CD4-positive, alpha-beta memory T cell (primary cell): ENCODE measurements at regions of chr3 and their contacts with region 1.

Region 1: GRCh38 chr3:121749276-121750086 is at the start of gene GOLGB1:
- DNase-seq: peak; percentile 93 to 98 (median 97)
- H3K4me3 ChIP-seq: peak within 1 kb of the TSS; percentile 75 to 86
- H3K4me3 Mint-ChIP-seq: peak within 1 kb of the TSS in 2 of 8 donors; percentile 17 to 44
- H3K27ac ChIP-seq: peak within 1 kb of the TSS; percentile 99
- H3K27ac Mint-ChIP-seq: no peak within 1 kb of the TSS
- H3K4me1 ChIP-seq: peaks cover 34% of the 10 kb centered on the region
- H3K4me1 Mint-ChIP-seq: peaks cover 8 to 10% (median 9%) of the 10 kb centered on the region in 4 donors
- H3K27me3 ChIP-seq: no peaks in the 10 kb centered on the region
- H3K27me3 Mint-ChIP-seq: peaks cover 6 to 7% of the 10 kb centered on the region in 2 donors
- total RNA-seq, gene GOLGB1: 45.7 to 49.3 TPM

Region 2: GRCh38 chr3:120596116-120596852 is 1153.2 kb before region 1 on chr3 and contains the start of gene NDUFB4:
- CTCF ChIA-PET with region 1: no interaction called
- POLR2A ChIA-PET with region 1: no interaction called
- intact Hi-C with region 1: loop called (anchors 10 kb)
- DNase-seq: peak; percentile 89 to 96 (median 96)
- H3K4me3 ChIP-seq: peak within 1 kb of the TSS; percentile 97 to 99
- H3K4me3 Mint-ChIP-seq: peak within 1 kb of the TSS; percentile 91 to 98 (median 95)
- H3K27ac ChIP-seq: peak within 1 kb of the TSS; percentile 98
- H3K27ac Mint-ChIP-seq: peak within 1 kb of the TSS in 6 of 7 donors; percentile 96 to 99 (median 98)
- H3K4me1 ChIP-seq: peaks cover 30% of the 10 kb centered on the region
- H3K4me1 Mint-ChIP-seq: peaks cover 6 to 8% (median 7%) of the 10 kb centered on the region in 4 donors
- H3K27me3 ChIP-seq: no peaks in the 10 kb centered on the region
- H3K27me3 Mint-ChIP-seq: no peaks in the 10 kb centered on the region
- total RNA-seq, gene NDUFB4: 82.1 to 82.8 TPM

Region 3: DNA sequence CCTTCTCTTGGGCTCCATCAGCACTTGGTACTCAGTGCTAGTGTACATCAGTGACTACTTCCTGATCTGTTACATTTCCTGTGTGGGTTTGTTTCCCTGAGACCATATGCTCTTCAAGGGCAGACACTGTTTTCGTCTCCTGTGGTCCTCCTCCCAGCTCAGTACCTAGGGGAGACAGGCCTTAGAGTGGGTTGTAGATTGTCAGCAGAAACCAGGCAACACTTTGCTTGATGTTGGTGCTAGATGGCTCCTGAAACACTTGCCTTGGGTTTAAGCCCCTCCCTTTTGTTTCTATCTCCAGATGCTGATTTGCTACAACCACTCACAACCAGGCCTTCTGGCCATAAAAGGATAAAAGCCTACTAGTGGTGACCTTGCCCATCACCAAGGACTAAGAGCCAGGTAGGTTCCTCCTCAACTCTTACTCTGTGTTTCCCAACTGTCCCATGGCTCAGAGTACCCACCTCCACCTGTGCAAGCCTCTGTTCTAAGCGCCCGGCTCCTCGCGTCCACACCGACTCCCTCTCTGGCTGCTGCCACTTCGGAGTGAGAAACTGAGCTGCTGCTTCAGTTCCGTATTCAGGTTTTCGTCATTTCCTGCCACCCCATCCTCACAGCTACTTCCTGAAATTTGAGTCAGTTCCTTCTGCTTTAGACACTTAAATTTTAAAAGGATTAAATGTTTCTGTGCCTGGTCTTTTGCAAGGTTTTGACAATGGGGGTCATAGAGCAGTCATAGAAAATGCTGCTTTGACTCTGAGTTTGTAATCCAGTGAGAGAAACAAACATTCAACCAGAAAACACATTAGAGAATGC is 88.9 kb before region 1 on chr3 and contains the start of gene HCLS1:
- CTCF ChIA-PET with region 1: interaction called, 7 read pairs
- POLR2A ChIA-PET with region 1: interaction called, 33 read pairs
- intact Hi-C with region 1: loop called (anchors 1 kb)
- DNase-seq: peak; percentile 80 to 86 (median 83)
- H3K4me3 ChIP-seq: peak within 1 kb of the TSS; percentile 58 to 76
- H3K4me3 Mint-ChIP-seq: peak within 1 kb of the TSS; percentile 91 to 99 (median 94)
- H3K27ac ChIP-seq: peak within 1 kb of the TSS; percentile 85
- H3K27ac Mint-ChIP-seq: peak within 1 kb of the TSS; percentile 95 to 100 (median 99)
- H3K4me1 ChIP-seq: peaks cover 42% of the 10 kb centered on the region
- H3K4me1 Mint-ChIP-seq: peaks cover 36 to 62% (median 50%) of the 10 kb centered on the region in 4 donors
- H3K27me3 ChIP-seq: no peaks in the 10 kb centered on the region
- H3K27me3 Mint-ChIP-seq: no peaks in the 10 kb centered on the region
- total RNA-seq, gene HCLS1: 336 TPM

Region 4: DNA sequence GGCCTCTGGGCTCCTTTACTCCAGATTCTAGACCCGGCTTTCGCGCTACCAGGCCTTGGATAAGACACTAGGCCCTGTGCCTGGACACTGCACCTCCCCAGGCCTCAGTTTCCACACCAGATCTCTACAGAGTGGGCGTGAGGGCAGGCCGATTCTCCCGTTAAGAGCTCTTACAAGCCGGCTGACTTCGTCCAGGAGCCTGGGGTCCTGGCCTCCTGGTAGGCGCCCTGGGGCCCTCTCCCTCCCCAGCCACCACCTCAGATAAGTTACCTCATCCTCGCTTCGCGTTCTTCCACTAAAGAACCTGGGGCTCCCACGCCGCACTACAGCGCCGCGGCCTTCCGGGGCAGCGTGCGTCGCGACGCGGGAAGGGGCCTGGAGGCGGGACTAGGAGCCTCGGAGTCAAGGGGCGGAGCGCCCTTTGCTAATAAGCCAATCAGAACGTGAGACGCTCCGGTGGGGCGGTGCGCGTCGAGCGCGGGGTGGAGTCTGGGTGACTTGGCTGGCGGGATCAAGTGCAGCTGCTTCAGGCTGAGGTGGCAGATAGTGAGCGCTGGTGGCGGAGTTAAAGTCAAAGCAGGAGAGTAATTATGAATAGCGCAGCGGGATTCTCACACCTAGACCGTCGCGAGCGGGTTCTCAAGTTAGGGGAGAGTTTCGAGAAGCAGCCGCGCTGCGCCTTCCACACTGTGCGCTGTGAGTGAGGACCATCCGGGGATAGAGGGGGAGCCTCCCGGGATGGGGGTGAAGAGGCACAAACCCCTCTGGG is 85.4 kb after region 1 on chr3 and contains the starts of genes EAF2 and IQCB1:
- CTCF ChIA-PET with region 1: no interaction called
- POLR2A ChIA-PET with region 1: interaction called, 6 read pairs
- intact Hi-C with region 1: loop called (anchors 1 kb)
- DNase-seq: peak; percentile 97 to 98 (median 97)
- H3K4me3 ChIP-seq: peak within 1 kb of the TSS; percentile 83 to 96
- H3K4me3 Mint-ChIP-seq: peak within 1 kb of the TSS; percentile 92 to 98 (median 94)
- H3K27ac ChIP-seq: peak within 1 kb of the TSS; percentile 84
- H3K27ac Mint-ChIP-seq: peak within 1 kb of the TSS; percentile 77 to 98 (median 94)
- H3K4me1 ChIP-seq: peaks cover 30% of the 10 kb centered on the region
- H3K4me1 Mint-ChIP-seq: peaks cover 32 to 54% (median 44%) of the 10 kb centered on the region in 4 donors
- H3K27me3 ChIP-seq: no peaks in the 10 kb centered on the region
- H3K27me3 Mint-ChIP-seq: no peaks in the 10 kb centered on the region
- total RNA-seq, gene EAF2: 5.7 to 6.3 TPM
- total RNA-seq, gene IQCB1: 37.9 to 38.2 TPM

Region 5: DNA sequence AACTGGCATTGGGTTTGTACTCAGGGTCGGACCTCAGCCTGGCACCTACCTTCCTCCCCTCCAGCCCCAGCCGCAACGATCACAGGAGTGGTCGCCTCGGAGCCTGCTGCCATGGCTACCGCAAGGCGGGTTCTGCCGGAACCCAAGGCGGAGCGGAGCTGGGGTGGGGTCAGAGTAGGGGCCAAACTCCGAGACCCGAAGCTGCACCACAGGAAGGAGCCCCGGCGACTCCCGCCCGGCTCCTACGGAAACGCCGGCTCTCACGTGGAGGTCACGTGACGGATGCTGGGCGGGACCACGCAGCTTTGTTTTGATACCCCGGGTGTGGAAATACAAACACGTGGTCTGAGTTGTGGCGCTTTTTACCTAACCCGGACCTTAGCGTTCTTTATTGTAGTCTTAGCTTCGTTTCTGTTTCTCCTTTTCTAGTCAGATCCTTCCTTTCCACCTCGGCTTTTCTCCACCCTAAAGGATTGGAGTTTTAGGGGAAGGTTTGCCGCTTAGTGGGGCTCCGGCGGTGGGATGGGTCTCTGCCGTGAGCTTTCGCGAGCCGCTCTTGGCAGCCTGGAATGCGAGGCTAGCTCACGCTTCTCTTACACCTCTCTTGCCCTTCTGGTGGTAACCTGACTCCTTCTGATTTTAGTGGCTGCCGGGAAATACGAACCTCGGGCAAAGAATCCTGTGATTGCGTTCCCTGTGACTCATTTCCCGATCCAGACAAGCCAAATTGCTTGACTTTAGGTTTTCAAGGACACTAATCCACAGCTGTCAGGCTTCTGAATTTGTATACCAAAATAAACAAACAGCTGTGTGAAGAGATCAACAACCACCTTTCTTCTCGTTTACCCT is 1044.3 kb after region 1 on chr3 and contains the start of gene HSPBAP1:
- CTCF ChIA-PET with region 1: no interaction called
- POLR2A ChIA-PET with region 1: interaction called, 6 read pairs
- intact Hi-C with region 1: loop called (anchors 2 kb)
- DNase-seq: peak; percentile 85 to 91 (median 87)
- H3K4me3 ChIP-seq: peak within 1 kb of the TSS; percentile 78 to 83
- H3K4me3 Mint-ChIP-seq: peak within 1 kb of the TSS in 6 of 8 donors; percentile 91 to 97 (median 94)
- H3K27ac ChIP-seq: peak within 1 kb of the TSS; percentile 74
- H3K27ac Mint-ChIP-seq: peak within 1 kb of the TSS in 5 of 7 donors; percentile 95 to 98 (median 97)
- H3K4me1 ChIP-seq: peaks cover 54% of the 10 kb centered on the region
- H3K4me1 Mint-ChIP-seq: peaks cover 25 to 32% (median 29%) of the 10 kb centered on the region in 4 donors
- H3K27me3 ChIP-seq: no peaks in the 10 kb centered on the region
- H3K27me3 Mint-ChIP-seq: no peaks in the 10 kb centered on the region
- total RNA-seq, gene HSPBAP1: 22.9 to 23.2 TPM

Region 6: DNA sequence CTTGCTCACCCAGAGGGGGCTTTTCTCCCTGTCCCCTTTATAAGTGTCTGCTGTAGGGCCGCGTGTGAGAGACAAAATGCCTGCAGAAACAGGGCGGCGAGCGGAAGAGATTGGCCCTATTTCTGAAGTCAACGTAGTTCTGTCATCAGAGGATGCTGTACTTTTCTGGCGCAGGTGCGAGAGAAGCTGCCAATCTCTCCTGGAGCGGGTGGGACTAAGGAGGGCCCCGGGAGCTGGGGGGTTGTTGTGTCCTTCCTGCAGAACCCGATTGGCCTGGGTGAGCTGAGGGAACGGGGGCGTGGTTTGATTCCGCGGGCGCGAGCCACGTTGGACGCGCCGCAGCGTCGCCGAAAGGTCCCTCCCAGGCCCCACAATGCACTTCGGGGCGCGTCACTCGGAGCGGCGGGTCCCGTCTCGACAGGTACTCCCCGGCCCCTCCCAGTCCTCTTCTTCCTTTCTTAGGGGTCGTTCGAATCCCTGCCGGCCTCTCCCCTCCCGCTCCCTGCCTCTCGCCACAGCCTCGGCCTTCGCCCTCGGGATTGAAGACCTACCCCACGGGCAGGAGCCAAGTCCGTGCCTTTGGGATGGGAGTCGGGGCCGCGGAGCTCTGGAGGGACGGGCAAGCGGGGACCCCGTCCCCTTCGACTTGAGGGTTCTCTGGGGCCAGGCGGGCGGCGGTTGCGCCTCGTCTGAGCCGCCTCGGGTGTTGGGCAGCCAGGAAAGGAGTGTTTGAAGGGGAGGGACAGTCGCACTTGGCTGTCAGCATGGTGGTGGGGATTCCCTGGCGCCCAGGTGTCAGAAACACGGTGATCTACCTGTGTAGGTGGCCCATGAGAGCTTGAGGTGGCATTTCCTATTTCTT is 1452.3 kb after region 1 on chr3 and contains the start of gene SEC22A:
- CTCF ChIA-PET with region 1: no interaction called
- POLR2A ChIA-PET with region 1: no interaction called
- intact Hi-C with region 1: loop called (anchors 1 kb)
- DNase-seq: peak; percentile 95 to 98 (median 98)
- H3K4me3 ChIP-seq: peak within 1 kb of the TSS; percentile 82 to 91
- H3K4me3 Mint-ChIP-seq: peak within 1 kb of the TSS; percentile 88 to 98 (median 90)
- H3K27ac ChIP-seq: peak within 1 kb of the TSS; percentile 98
- H3K27ac Mint-ChIP-seq: peak within 1 kb of the TSS; percentile 92 to 99 (median 98)
- H3K4me1 ChIP-seq: peaks cover 20% of the 10 kb centered on the region
- H3K4me1 Mint-ChIP-seq: peaks cover 21 to 38% (median 28%) of the 10 kb centered on the region in 4 donors
- H3K27me3 ChIP-seq: no peaks in the 10 kb centered on the region
- H3K27me3 Mint-ChIP-seq: peaks cover 0 to 4% of the 10 kb centered on the region in 2 donors
- total RNA-seq, gene SEC22A: 19.4 to 23.2 TPM

Region 7: DNA sequence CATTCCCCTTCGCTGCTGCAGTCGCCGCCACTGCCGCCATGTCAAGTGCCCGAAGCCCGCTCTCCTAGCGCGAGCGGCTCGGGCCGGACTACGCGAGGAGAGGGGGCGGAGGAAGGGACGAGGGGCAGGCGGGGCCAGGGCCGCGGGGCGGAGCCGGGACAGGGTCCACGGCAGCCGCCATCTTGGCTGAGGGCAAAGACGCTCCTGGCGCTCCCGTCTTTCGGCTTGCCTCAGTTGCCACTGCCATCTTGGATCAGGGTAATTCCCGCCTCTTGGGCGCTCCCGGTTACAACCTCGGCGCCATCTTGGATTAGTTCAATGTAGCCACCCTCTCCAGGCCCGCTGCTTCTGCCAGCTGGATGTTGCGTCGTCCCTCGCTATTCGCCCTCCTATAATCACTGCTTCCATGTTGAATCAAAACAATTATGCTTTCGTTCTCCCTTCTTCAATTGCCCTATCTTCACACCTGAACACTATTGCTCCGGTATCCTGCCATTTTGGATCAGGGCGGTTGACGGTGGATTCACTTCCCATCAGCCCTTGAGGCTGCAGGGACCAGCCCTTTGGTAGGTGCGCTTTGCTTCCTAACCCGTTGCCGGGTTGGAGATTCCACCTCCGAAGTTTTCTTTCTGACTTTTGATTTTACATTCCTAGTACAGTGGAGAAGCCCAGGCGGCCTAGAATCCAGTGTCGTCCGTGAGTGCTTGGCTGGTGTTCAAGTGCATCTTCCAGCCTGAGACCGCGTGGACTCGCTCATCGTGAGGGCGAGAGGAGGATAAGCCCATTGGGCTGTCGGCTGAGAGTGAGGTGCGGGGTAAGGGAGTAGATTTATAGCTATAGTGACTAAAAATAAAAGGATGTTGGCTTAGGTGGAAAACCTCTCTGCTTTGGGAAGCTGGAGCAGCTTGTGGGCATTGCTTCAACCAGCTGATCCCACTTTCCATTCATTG is 1835.8 kb after region 1 on chr3 and contains the start of gene HACD2:
- CTCF ChIA-PET with region 1: no interaction called
- POLR2A ChIA-PET with region 1: no interaction called
- intact Hi-C with region 1: loop called (anchors 1 kb)
- DNase-seq: peak; percentile 90 to 96 (median 92)
- H3K4me3 ChIP-seq: peak within 1 kb of the TSS; percentile 80 to 99
- H3K4me3 Mint-ChIP-seq: peak within 1 kb of the TSS in 5 of 8 donors; percentile 88 to 93 (median 92)
- H3K27ac ChIP-seq: peak within 1 kb of the TSS; percentile 78
- H3K27ac Mint-ChIP-seq: peak within 1 kb of the TSS in 6 of 7 donors; percentile 76 to 94 (median 87)
- H3K4me1 ChIP-seq: peaks cover 38% of the 10 kb centered on the region
- H3K4me1 Mint-ChIP-seq: peaks cover 20 to 28% (median 22%) of the 10 kb centered on the region in 4 donors
- H3K27me3 ChIP-seq: no peaks in the 10 kb centered on the region
- H3K27me3 Mint-ChIP-seq: no peaks in the 10 kb centered on the region
- total RNA-seq, gene HACD2: 26.0 to 29.5 TPM